IMR-90 (cell line): ENCODE measurements at regions of chr9 and their contacts with region 1.

Region 1: GRCh38 chr9:70954126-70954525 is 167.3 kb downstream of the TRPM3 start:
- DNase-seq: peak; percentile 90
- ATAC-seq: peak; percentile 93
- H3K4me3 ChIP-seq: no peak overlapping the region
- H3K27ac ChIP-seq: peak overlapping the region; percentile 94
- H3K4me1 ChIP-seq: peaks cover 12% of the 10 kb centered on the region
- H3K27me3 ChIP-seq: no peaks in the 10 kb centered on the region
- CTCF ChIP-seq: no peak
- POLR2A ChIP-seq: no peak
- RAD21 ChIP-seq: no peak

Region 2: GRCh38 chr9:70983723-70984295 is 29.7 kb after region 1 on chr9:
- CTCF ChIA-PET with region 1: no interaction called
- POLR2A ChIA-PET with region 1: no interaction called
- dilution Hi-C with region 1: no loop called
- in situ Hi-C with region 1: no loop called
- intact Hi-C with region 1: loop called (anchors 1 kb)
- DNase-seq: peak; percentile 62
- ATAC-seq: peak; percentile 86
- H3K4me3 ChIP-seq: no peak overlapping the region
- H3K27ac ChIP-seq: peak overlapping the region; percentile 43; the same call in 1 of the 2 replicates
- H3K4me1 ChIP-seq: peaks cover 3% of the 10 kb centered on the region
- H3K27me3 ChIP-seq: no peaks in the 10 kb centered on the region
- CTCF ChIP-seq: no peak
- POLR2A ChIP-seq: no peak
- RAD21 ChIP-seq: no peak

Region 3: GRCh38 chr9:71003346-71003745 is 49.2 kb after region 1 on chr9:
- CTCF ChIA-PET with region 1: no interaction called
- POLR2A ChIA-PET with region 1: no interaction called
- dilution Hi-C with region 1: no loop called
- in situ Hi-C with region 1: no loop called
- intact Hi-C with region 1: no loop called
- DNase-seq: no peak
- ATAC-seq: no peak
- H3K4me3 ChIP-seq: no peak overlapping the region
- H3K27ac ChIP-seq: no peak overlapping the region
- H3K4me1 ChIP-seq: no peaks in the 10 kb centered on the region
- H3K27me3 ChIP-seq: no peaks in the 10 kb centered on the region
- CTCF ChIP-seq: no peak
- POLR2A ChIP-seq: no peak
- RAD21 ChIP-seq: no peak